AG04450 (cell line): ENCODE measurements at regions of chr10 and their contacts with region 1.

Region 1: DNA sequence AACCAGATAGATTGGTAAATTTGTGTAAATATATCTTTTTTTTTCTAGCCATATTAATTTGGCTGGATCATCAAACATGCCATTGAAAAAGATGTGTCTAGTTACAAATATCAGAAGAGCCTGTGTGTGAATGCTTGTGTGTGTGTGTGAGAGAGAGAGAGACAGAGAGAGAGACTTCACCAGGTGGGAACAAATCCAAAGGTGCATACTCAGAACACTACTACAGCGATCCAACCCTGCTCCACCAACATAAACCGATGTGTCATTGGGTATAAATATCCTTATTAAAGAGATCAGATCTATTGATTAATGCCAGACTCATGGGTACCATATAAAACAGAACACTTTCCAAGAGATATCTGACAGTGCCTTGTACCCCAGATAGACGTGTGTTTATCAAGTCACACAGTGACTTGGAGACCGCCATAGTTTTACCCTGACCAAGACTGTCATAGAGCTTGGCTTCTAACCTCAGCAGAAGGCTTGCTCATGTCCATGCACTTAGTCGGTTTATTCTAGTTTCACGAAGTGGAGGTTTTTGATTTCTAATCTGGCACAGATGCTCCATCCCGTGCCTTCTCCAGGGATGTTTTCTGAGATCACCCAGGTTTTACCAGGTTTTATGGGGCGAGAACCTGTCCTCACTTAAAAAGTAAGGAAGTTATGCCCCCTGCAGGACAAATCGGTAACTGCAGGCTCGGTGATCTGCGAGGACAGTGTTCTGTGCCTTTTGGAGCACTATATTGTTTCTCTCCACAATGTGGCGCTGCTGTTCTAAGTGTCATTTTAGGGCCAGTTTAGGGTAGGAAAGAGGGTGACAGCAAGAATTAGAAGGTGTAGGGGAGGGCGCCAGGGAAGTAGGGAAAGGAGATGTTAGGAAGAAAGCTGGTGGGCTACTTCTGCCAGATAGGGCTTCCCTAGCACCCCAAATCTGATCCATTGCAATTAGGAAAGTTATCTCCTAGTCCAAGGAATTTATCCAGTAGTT is 29.3 kb upstream of the WNT8B start:
- DNase-seq: peak; percentile 81
- H3K4me3 ChIP-seq: no peak overlapping the region
- H3K27ac ChIP-seq: no peak overlapping the region
- H3K27me3 ChIP-seq: peaks cover 3% of the 10 kb centered on the region
- CTCF ChIP-seq: peak; percentile 99

Region 2: DNA sequence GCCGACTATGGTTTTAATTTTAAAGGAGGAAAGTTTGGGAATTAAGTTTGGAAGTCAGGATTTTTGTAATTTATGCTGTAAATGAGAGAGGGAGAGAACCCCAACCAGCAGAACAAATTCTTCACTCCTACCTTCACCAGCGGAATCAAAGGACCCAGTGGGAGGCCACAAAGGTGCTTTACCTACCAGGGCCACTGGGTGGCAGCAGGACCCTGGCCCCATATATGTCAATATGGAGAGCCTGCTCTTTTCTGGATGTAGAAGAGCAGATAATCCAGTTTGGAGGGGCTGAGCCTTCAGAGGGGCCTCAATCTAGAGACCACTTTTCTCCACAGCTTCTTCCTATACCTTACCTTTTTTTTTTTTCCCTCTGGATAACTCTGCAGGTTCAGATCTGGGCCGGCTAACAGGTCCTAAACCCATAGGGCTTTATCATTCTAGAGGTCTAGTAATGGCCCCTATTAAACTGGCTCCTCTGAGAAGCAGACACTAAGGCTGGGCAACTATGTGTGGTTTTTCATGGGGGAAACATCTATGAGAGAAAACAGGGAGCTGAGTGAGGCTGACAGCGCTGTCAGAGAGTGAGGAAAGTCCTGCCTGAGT is 95.0 kb before region 1 on chr10:
- CTCF ChIA-PET with region 1: interaction called, 381 read pairs
- POLR2A ChIA-PET with region 1: no interaction called
- DNase-seq: no peak
- H3K4me3 ChIP-seq: no peak overlapping the region
- H3K27ac ChIP-seq: no peak overlapping the region
- H3K27me3 ChIP-seq: peaks cover 12% of the 10 kb centered on the region
- CTCF ChIP-seq: peak; percentile 96

Region 3: DNA sequence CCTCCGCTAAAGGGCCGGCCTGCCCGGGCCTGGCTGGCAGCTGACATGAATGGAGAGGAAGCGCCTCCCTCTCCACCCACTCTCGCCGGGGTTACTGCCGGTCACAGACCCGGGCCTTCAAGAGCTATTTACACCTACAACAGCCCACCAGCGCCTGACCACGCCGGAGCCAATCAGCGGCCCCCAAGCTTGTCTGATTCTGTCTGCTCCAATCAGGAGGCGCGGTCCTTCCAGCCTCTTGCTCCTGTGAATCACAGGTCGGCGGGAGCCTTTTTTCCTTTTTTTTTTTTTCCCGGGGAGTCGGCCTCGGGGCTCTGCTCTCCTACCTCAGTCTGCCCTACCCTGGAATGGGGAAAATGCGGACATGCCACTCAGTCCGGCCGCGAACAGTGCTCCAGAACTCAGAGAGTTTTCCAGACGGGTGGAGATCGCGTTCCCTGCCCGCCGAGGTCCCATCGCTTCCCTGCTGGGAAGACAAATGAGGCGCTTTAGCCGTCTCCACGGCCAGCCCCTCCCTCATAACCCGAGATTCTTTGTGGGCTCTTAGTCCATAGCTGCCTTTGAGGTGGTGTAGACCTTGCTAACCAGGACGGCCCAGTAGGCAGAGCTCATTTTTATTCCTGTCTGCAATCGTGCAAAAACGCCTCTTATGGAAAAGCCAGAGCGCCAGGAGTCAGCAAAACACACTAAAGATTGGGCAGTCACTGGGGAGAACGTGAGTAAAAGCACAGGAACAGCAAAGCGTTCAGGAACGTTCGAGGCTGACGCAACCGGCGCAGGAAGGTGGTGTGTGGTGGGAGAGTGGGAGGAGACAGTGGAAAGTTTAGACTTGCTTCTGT is 60.0 kb before region 1 on chr10:
- CTCF ChIA-PET with region 1: interaction called, 11 read pairs
- POLR2A ChIA-PET with region 1: no interaction called
- DNase-seq: peak; percentile 98
- H3K4me3 ChIP-seq: peak overlapping the region; percentile 74
- H3K27ac ChIP-seq: peak overlapping the region; percentile 100
- H3K27me3 ChIP-seq: no peaks in the 10 kb centered on the region
- CTCF ChIP-seq: no peak

Region 4: DNA sequence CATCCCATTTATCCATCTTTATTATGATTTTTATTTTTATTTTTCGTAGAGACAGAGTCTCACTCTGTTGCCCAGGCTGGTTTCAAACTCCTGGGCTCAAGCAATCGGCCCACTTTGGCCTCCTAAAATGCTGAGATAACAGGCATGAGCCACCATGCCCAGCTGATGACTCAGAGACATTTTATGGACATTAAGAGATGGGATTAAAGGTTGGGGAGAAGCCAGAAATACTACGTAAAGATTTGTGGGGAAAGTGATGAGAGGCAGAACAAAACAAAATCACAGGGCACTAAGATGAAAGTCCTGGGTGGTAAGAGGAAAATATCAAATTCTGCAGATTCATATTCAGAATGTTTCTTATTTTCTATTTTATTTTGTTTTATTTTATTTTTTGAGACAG is 36.8 kb after region 1 on chr10:
- CTCF ChIA-PET with region 1: interaction called, 10 read pairs
- POLR2A ChIA-PET with region 1: no interaction called
- DNase-seq: no peak
- H3K4me3 ChIP-seq: no peak overlapping the region
- H3K27ac ChIP-seq: no peak overlapping the region
- H3K27me3 ChIP-seq: peaks cover 19% of the 10 kb centered on the region
- CTCF ChIP-seq: no peak

Region 5: GRCh38 chr10:100508691-100509150 is 75.2 kb after region 1 on chr10:
- CTCF ChIA-PET with region 1: interaction called, 137 read pairs
- POLR2A ChIA-PET with region 1: no interaction called
- DNase-seq: peak; percentile 24
- H3K4me3 ChIP-seq: no peak overlapping the region
- H3K27ac ChIP-seq: no peak overlapping the region
- H3K27me3 ChIP-seq: no peaks in the 10 kb centered on the region
- CTCF ChIP-seq: peak; percentile 78

Region 6: DNA sequence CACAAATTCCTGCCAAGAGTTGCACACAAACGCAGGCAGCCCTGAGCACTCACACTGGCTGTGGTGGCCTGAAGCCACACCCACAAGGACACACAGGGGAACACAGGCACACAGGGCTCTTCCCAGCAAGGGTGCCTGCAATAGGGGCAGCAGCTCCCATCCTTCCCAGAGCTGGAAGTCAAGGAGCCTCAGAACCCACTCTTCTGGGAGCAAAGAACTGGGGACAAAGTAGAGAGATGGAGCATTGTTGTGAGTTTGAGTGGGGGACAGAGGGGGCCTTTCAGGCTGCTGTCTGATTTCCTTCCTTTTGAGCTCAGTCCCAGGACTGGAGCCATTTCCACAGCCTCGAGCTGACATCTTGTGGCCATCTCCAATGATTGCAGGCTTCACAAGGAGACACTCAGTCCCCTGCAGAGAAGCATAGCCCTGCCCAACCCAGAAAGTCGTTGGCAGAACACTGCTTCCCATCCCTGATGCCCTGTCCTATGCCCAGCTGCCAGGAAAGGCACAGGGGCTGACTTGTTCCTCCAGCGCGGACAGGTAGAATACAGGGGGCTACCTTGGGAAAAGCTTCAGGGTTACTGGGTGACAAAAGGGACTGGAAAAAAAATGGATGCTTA is 444.9 kb after region 1 on chr10:
- CTCF ChIA-PET with region 1: interaction called, 55 read pairs
- POLR2A ChIA-PET with region 1: no interaction called
- DNase-seq: peak; percentile 51
- H3K4me3 ChIP-seq: no peak overlapping the region
- H3K27ac ChIP-seq: no peak overlapping the region
- H3K27me3 ChIP-seq: no peaks in the 10 kb centered on the region
- CTCF ChIP-seq: peak; percentile 85